AG04450 (cell line): ENCODE measurements at regions of chr2 and their contacts with region 1.

Region 1: DNA sequence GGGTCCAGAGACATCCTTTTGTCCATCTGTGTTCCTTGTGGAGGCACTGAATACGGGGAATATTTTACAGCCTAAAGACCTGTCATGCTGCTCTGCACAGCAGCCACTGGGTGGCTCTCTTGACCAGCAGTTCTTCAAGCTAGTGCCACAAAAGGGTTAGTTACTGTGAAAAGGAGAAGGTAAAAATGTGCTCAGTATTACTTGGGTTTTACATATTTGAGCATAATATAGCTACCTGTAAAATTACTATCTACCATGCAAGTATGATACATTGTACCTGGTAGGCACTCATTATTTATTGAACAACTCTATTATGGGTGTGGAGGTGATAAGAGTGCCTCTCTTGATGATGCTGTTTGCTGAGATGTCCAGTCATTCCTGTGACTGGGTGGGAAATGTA is 23.6 kb downstream of the FZD5 start:
- DNase-seq: peak; percentile 53
- H3K4me3 ChIP-seq: no peak overlapping the region
- H3K27ac ChIP-seq: no peak overlapping the region
- H3K27me3 ChIP-seq: no peaks in the 10 kb centered on the region
- CTCF ChIP-seq: peak; percentile 96

Region 2: GRCh38 chr2:207655000-207655399 is 91.1 kb before region 1 on chr2:
- CTCF ChIA-PET with region 1: no interaction called
- POLR2A ChIA-PET with region 1: no interaction called
- DNase-seq: no peak
- H3K4me3 ChIP-seq: no peak overlapping the region
- H3K27ac ChIP-seq: no peak overlapping the region
- H3K27me3 ChIP-seq: no peaks in the 10 kb centered on the region
- CTCF ChIP-seq: no peak

Region 3: DNA sequence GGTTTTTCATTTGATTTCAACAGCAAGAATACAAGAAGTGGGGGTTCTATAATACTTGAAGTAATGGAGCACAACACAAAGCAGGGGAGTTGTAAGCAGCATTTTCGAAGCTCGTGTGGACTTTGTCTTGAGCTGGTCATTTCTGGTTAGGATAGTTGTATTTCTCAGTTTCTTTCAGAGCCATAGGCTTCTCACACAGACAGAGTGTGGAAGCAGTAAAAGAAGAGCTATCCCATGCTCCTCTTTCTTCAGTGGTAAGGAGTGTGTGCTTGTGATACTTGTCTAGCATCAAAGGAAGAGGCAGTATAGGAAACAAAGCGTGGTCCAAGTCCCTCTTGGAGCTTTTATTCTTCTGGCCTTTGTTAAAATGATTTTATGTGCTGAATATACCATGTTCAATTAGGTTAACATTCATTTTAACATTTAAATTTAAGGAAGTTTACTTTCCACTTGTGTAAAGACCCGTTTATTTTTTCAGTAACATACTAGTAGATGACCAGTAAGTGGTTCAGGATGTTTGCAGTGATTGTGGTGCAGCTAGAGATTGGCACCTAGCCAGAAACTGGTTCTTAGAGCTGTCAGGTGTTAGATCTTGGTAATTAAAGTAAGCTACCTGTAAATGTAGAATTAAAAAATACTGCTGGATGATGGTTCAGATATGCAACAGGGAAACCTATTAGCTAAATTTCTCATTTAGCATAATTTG is 20.1 kb before region 1 on chr2:
- CTCF ChIA-PET with region 1: interaction called, 20 read pairs
- POLR2A ChIA-PET with region 1: no interaction called
- DNase-seq: no peak
- H3K4me3 ChIP-seq: no peak overlapping the region
- H3K27ac ChIP-seq: no peak overlapping the region
- H3K27me3 ChIP-seq: no peaks in the 10 kb centered on the region
- CTCF ChIP-seq: no peak

Region 4: GRCh38 chr2:207769597-207770486 is 23.7 kb after region 1 on chr2 and contains the start of gene FZD5:
- CTCF ChIA-PET with region 1: interaction called, 13 read pairs
- POLR2A ChIA-PET with region 1: interaction called, 3 read pairs
- DNase-seq: no peak
- H3K4me3 ChIP-seq: peak within 1 kb of the TSS; percentile 69
- H3K27ac ChIP-seq: no peak within 1 kb of the TSS
- H3K27me3 ChIP-seq: peaks cover 9% of the 10 kb centered on the region
- CTCF ChIP-seq: peak; percentile 44
- polyA plus RNA-seq, gene FZD5: 0.09 and 0.11 TPM in 2 replicates

Region 5: GRCh38 chr2:208025037-208025813 is 279.1 kb after region 1 on chr2 and contains the start of gene PLEKHM3:
- CTCF ChIA-PET with region 1: interaction called, 12 read pairs
- POLR2A ChIA-PET with region 1: no interaction called
- DNase-seq: peak; percentile 75
- H3K4me3 ChIP-seq: peak within 1 kb of the TSS; percentile 94
- H3K27ac ChIP-seq: peak within 1 kb of the TSS; percentile 73
- H3K27me3 ChIP-seq: no peaks in the 10 kb centered on the region
- CTCF ChIP-seq: no peak
- polyA plus RNA-seq, gene PLEKHM3: 5.3 and 7.0 TPM in 2 replicates

Region 6: GRCh38 chr2:208254871-208255556 is 508.9 kb after region 1 on chr2 and contains the start of gene IDH1:
- CTCF ChIA-PET with region 1: interaction called, 18 read pairs
- POLR2A ChIA-PET with region 1: no interaction called
- DNase-seq: peak; percentile 82
- H3K4me3 ChIP-seq: peak within 1 kb of the TSS; percentile 85
- H3K27ac ChIP-seq: peak within 1 kb of the TSS; percentile 42
- H3K27me3 ChIP-seq: no peaks in the 10 kb centered on the region
- CTCF ChIP-seq: peak; percentile 62
- polyA plus RNA-seq, gene IDH1: 111 and 148 TPM in 2 replicates